Right ventricle myocardium superior (tissue), 1 donor: ENCODE measurements at regions of chr2 and their contacts with region 1.

Region 1: GRCh38 chr2:111897924-111898702 is at the start of gene MERTK:
- DNase-seq: peak; percentile 90
- ATAC-seq: peak; percentile 93
- total RNA-seq, gene MERTK: 5.0 TPM

Region 2: DNA sequence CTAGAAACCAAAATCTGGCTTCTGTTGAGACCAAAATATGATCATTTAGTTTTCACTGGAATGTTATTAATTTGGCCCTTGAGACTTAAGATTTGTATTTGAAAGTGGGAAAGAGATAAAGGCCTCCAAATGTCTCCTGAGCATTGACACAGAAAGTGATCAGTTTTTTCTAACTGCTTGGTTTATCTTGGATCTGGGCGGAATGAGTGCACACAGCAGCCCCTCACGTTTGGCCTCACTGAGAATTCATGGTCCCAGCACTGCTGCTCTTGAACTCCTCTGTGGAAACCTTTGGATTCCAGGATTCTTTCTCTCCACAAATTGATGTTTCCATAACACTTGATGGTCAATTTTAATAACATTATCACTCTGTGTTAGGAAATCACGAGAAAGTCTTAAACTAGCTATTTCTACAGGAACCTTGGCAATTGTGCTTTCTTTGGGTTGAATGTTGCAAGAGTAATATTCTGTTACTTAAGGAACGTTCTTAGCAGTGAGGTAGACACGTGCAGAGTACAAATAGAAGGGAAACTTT is 957.7 kb before region 1 on chr2:
- intact Hi-C with region 1: no loop called
- DNase-seq: no peak
- ATAC-seq: no peak

Region 3: GRCh38 chr2:112054847-112055729 is 157.0 kb after region 1 on chr2 and contains the start of gene TMEM87B:
- intact Hi-C with region 1: loop called (anchors 5 kb)
- DNase-seq: peak; percentile 99
- ATAC-seq: peak; percentile 86
- total RNA-seq, gene TMEM87B: 6.0 TPM

Region 4: GRCh38 chr2:112075490-112076260 is 177.6 kb after region 1 on chr2:
- intact Hi-C with region 1: no loop called
- DNase-seq: no peak
- ATAC-seq: no peak